ENCODE measurements at regions of chr4 and their contacts with region 1.

Region 1: GRCh38 chr4:95155759-95156451 is 392.9 kb downstream of the UNC5C start:
- DNase-seq: peak; percentile 52
- H3K4me3 ChIP-seq: no peak overlapping the region
- H3K27ac ChIP-seq: no peak overlapping the region
- H3K4me1 ChIP-seq: no peaks in the 10 kb centered on the region
- H3K27me3 ChIP-seq: no peaks in the 10 kb centered on the region
- CTCF ChIP-seq: peak; percentile 40 to 43
- POLR2A ChIP-seq: no peak

Region 2: DNA sequence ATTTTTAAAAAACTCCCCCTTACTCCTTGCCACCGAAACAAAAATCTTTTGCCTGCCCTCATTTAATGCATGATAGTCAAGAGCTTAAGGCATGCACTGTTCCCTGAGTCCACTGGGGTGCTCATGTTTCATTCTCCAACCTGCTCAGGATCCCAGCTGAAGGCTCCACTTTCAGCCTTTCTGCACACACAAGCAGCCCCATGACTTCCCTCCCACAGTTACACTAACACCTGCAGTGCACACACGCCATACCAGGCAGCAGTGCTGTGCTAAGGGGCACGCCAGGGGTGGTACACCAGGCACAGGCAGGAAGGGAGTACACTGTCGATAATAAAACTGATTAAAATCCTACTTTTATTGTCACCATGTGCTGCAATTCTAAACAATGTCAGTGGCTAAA is 13.0 kb before region 1 on chr4:
- CTCF ChIA-PET with region 1: interaction called, 10 read pairs
- POLR2A ChIA-PET with region 1: no interaction called
- dilution Hi-C with region 1: no loop called
- intact Hi-C with region 1: no loop called
- DNase-seq: no peak
- H3K4me3 ChIP-seq: no peak overlapping the region
- H3K27ac ChIP-seq: no peak overlapping the region
- H3K4me1 ChIP-seq: no peaks in the 10 kb centered on the region
- H3K27me3 ChIP-seq: no peaks in the 10 kb centered on the region
- CTCF ChIP-seq: no peak
- POLR2A ChIP-seq: no peak

Region 3: GRCh38 chr4:95232358-95233156 is 76.7 kb after region 1 on chr4:
- CTCF ChIA-PET with region 1: no interaction called
- POLR2A ChIA-PET with region 1: no interaction called
- dilution Hi-C with region 1: no loop called
- intact Hi-C with region 1: no loop called
- DNase-seq: no peak
- H3K4me3 ChIP-seq: no peak overlapping the region
- H3K27ac ChIP-seq: no peak overlapping the region
- H3K4me1 ChIP-seq: no peaks in the 10 kb centered on the region
- H3K27me3 ChIP-seq: no peaks in the 10 kb centered on the region
- CTCF ChIP-seq: no peak
- POLR2A ChIP-seq: no peak

Region 4: GRCh38 chr4:95761429-95762225 is 605.7 kb after region 1 on chr4:
- CTCF ChIA-PET with region 1: no interaction called
- POLR2A ChIA-PET with region 1: no interaction called
- dilution Hi-C with region 1: no loop called
- intact Hi-C with region 1: loop called (anchors 10 kb)
- DNase-seq: peak; percentile 81
- H3K4me3 ChIP-seq: no peak overlapping the region
- H3K27ac ChIP-seq: peak overlapping the region; percentile 30
- H3K4me1 ChIP-seq: peaks cover 30% of the 10 kb centered on the region
- H3K27me3 ChIP-seq: peaks cover 0 to 2% of the 10 kb centered on the region in 2 experiments
- CTCF ChIP-seq: no peak
- POLR2A ChIP-seq: no peak

Region 5: GRCh38 chr4:97153042-97153441 is 1997.1 kb after region 1 on chr4:
- CTCF ChIA-PET with region 1: interaction called, 18 read pairs
- POLR2A ChIA-PET with region 1: no interaction called
- dilution Hi-C with region 1: no loop called
- intact Hi-C with region 1: loop called (anchors 5 kb)
- DNase-seq: peak; percentile 36
- H3K4me3 ChIP-seq: no peak overlapping the region
- H3K27ac ChIP-seq: no peak overlapping the region
- H3K4me1 ChIP-seq: no peaks in the 10 kb centered on the region
- H3K27me3 ChIP-seq: no peaks in the 10 kb centered on the region
- CTCF ChIP-seq: peak; percentile 9 to 36
- POLR2A ChIP-seq: no peak

Measured in endothelial cell of umbilical vein (primary cell).